A673 (cell line): ENCODE measurements at regions of chr1 and their contacts with region 1.

Region 1: DNA sequence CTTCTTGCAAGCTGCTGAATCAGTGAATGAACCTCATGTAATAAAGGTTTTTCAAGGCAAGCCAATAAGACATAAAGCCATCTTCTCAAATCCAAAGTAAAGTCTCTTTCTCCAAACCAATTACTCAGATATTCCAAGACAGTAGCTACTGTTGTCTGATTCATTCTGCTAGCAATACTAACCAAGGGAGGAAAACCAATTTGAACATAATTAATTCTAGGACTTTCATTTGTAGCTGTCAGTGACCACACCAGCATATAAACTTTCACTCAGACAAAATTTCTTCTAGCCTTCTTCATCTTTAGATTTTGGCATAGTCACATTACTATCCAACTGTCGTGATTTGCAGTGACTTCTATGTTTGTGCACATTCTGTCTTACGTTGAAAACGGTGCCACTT is 10.5 kb upstream of the INTS3 start:
- DNase-seq: no peak
- H3K4me3 ChIP-seq: no peak overlapping the region
- H3K27ac ChIP-seq: no peak overlapping the region
- H3K4me1 ChIP-seq: no peaks in the 10 kb centered on the region
- H3K27me3 ChIP-seq: no peaks in the 10 kb centered on the region
- CTCF ChIP-seq: no peak

Region 2: DNA sequence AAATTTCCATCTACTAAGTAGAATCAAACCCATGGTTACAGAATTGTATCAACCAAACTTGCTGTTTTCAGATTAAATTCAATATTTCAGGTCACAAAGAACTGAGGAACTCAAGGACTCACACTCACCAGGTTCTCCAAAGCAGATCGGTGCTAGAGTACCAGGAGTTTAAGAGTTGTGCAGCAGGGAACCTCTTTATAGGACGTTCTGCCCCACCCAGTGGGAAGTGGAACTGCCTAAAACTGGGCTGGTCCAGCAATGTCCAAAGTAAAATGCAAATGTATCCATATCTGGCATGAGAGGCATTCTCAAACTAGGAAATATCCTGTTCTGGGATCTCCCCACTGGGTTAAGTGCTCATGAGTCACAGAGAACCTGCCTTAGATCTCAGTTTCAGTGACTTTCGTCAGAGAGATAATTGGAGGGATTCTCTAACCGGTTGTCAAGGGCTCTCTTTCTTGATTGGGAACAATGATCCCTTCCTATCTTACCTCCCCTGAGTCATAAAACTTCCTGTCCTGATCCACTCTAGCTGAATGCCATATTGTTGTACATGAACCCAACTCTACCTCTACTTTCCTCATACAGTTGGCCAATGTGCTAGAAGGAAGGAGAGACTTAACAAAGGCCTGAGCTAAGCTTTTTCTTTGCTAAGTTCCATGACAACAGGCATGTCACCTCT is 676.2 kb before region 1 on chr1 and contains the start of gene SPRR2D:
- CTCF ChIA-PET with region 1: no interaction called
- POLR2A ChIA-PET with region 1: no interaction called
- intact Hi-C with region 1: no loop called
- DNase-seq: peak; percentile 6
- H3K4me3 ChIP-seq: no peak within 1 kb of the TSS
- H3K27ac ChIP-seq: no peak within 1 kb of the TSS
- H3K4me1 ChIP-seq: no peaks in the 10 kb centered on the region
- H3K27me3 ChIP-seq: peaks cover 39% of the 10 kb centered on the region
- CTCF ChIP-seq: no peak
- total RNA-seq, gene SPRR2D: 0.62 TPM in 1 of 2 replicates, not detected in the other

Region 3: GRCh38 chr1:153699768-153700167 is 17.6 kb before region 1 on chr1:
- CTCF ChIA-PET with region 1: interaction called, 4 read pairs
- POLR2A ChIA-PET with region 1: interaction called, 4 read pairs
- intact Hi-C with region 1: loop called (anchors 1 kb)
- DNase-seq: no peak
- H3K4me3 ChIP-seq: no peak overlapping the region
- H3K27ac ChIP-seq: no peak overlapping the region
- H3K4me1 ChIP-seq: peaks cover 7% of the 10 kb centered on the region
- H3K27me3 ChIP-seq: no peaks in the 10 kb centered on the region
- CTCF ChIP-seq: no peak

Region 4: GRCh38 chr1:154404984-154405761 is 687.8 kb after region 1 on chr1 and contains the start of gene IL6R:
- CTCF ChIA-PET with region 1: no interaction called
- POLR2A ChIA-PET with region 1: no interaction called
- intact Hi-C with region 1: no loop called
- DNase-seq: peak; percentile 75
- H3K4me3 ChIP-seq: peak within 1 kb of the TSS; percentile 50
- H3K27ac ChIP-seq: no peak within 1 kb of the TSS
- H3K4me1 ChIP-seq: peaks cover 13% of the 10 kb centered on the region
- H3K27me3 ChIP-seq: peaks cover 18% of the 10 kb centered on the region
- CTCF ChIP-seq: peak; percentile 40
- total RNA-seq, gene IL6R: 1.6 and 1.9 TPM in 2 replicates